Spleen (tissue), 13 donors: ENCODE measurements at regions of chr12 and their contacts with region 1.

Region 1: GRCh38 chr12:112978163-112979040 is at the start of gene OAS2:
- DNase-seq: peak; percentile 91
- H3K4me3 ChIP-seq: peak within 1 kb of the TSS; percentile 56 to 86 (median 72)
- H3K27ac ChIP-seq: peak within 1 kb of the TSS; percentile 79 to 98 (median 94)
- H3K4me1 ChIP-seq: peaks cover 13 to 66% (median 45%) of the 10 kb centered on the region in 6 donors
- H3K27me3 ChIP-seq: no peaks in the 10 kb centered on the region
- CTCF ChIP-seq: peak in 2 of 11 experiments; percentile 18 to 31
- POLR2A ChIP-seq: peak; percentile 31 to 97 (median 86)
- total RNA-seq, gene OAS2: 37.9 to 71.4 (median 48.7) TPM

Region 2: GRCh38 chr12:112906712-112907414 is 71.5 kb before region 1 on chr12 and contains the start of gene OAS1:
- intact Hi-C with region 1: loop called (anchors 5 kb)
- DNase-seq: no peak
- H3K4me3 ChIP-seq: peak within 1 kb of the TSS; percentile 51 to 75 (median 58)
- H3K27ac ChIP-seq: peak within 1 kb of the TSS; percentile 79 to 94 (median 87)
- H3K4me1 ChIP-seq: peaks cover 43 to 89% (median 79%) of the 10 kb centered on the region in 6 donors
- H3K27me3 ChIP-seq: no peaks in the 10 kb centered on the region
- CTCF ChIP-seq: no peak
- POLR2A ChIP-seq: peak in 1 of 3 donors; percentile 63
- total RNA-seq, gene OAS1: 43.2 to 68.4 (median 56.7) TPM